Right ventricle myocardium inferior (tissue), 1 donor: ENCODE measurements at regions of chr3 and their contacts with region 1.

Region 1: DNA sequence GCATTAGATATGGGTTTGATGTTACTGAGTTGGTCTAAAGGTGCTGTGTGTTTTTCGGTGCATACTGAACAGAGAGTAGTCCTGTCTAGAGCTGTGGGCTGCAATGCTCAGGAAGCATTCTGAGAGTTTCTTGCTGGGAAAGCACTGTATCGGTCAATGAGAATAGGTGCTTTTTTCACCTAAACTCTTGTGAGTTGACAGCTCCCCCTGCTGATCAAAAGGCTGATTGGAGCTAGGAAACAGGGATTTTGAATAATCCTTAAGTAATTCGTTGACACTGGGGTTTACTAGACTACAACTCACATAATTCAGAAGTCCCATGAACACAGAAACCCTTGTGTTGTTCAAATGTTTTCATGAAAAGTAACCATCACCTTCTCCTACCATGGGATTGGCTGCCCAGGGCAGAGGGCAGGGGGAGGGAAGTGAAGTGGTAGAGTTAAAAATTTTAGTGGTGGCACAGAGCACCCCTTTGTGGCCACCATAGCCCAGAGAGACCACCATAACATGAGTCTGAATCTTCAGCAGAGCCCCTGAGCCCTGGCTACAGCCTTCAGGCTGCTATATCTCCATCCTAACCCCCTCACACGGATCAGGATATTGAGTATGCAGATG is 13.0 kb upstream of the MANF start:
- DNase-seq: no peak
- ATAC-seq: no peak

Region 2: DNA sequence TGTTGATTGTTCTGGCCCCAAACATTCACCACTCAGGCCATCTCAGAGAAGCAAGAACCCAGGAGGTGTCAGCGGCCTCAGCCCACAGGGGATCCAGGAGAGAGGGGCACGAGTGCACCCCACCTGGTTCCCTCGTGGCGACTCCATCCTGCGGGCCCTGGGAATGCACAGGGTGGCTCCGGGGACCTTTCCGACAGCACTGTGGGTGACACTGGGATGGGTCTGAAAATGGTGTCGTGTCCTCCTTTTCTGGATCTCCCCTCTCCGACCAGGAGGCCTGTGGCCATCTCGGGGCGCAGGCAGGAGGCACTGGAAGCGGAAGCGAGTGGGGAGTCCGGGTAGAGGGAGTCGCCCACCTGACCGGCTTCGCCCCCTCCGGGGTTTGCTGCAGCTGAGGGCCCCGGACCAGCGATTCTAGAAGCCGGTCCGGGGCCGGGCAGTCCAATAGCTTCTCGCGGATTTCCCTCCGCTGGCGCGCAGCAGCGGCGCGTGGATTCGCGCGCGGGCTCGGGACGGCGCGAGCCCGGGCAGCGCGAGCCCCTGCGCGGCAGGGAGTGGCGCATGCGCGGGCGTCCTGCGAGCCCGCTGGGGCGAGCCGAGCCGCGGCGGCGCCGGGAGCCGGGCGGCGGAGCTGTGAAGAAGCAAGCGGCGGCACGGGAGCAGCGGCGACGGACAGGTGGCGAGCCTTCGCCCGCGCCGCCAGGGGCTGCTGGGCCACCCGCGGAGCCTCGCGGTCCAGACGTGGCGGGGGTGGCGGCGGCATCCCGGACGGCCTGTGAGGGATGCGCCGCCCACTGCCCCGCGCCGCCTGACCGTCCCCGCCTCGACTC is 697.5 kb before region 1 on chr3 and contains the start of gene DOCK3:
- intact Hi-C with region 1: loop called (anchors 5 kb)
- DNase-seq: peak; percentile 80
- ATAC-seq: peak; percentile 90
- total RNA-seq, gene DOCK3: 3.9 TPM

Region 3: DNA sequence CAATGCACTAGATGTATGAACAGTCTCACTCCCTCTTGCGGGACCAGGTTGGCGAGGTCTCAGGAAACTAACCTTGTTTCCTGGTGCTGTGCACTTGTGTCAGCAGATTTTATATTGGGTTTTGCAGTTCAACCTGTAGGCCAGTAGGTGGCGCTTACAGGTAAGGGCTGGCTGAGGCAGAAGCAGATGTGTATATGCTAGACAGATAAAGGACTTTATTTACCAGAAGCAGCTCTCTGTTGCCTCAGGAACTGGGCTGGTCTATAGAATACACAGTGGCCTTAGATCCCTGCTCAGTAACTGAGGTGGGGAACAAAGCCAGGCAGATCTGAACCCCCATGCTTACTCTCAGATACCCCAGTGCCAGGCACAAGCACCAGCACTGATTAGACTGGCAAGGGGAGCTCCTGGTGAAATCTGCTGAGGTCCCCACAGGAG is 400.5 kb before region 1 on chr3:
- intact Hi-C with region 1: loop called (anchors 5 kb)
- DNase-seq: no peak
- ATAC-seq: peak; percentile 34

Region 4: DNA sequence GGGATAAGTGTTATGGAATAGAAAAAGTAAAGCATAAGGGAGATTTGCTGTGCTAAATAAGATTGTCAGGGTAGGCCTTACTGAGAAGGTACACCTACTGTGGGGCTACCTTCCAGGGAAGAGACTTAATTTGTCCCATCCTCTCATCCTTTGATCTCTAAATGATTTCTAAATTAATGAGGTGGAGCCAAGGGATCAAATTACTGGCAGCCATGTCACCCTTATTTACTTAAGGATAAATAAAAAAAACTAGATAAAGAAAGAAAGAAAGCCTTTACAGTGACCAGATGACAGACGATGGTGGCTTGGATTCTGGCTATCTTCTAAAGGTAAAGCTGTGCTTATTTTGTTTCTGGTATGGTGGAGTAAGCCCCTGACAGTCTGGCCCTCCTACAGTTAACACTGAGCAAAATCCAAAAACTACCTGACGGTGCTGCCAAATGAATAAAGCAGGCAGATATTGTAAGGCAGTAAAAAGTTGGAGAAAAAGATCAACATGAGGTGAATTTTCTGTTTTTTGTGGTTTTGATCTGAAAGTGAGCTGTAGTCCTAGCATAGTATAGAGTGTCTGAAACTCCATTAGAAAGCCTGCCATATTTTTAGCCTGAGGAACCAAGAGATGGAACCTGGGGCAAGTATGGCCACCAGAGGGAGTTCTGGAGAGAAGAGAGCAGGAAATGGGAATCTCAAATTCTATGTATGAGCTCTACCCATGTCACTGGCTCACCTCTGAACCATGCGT is 272.1 kb before region 1 on chr3:
- intact Hi-C with region 1: loop called (anchors 5 kb)
- DNase-seq: no peak
- ATAC-seq: peak; percentile 52

Region 5: GRCh38 chr3:51145811-51146585 is 226.1 kb before region 1 on chr3:
- intact Hi-C with region 1: no loop called
- DNase-seq: no peak
- ATAC-seq: no peak

Region 6: GRCh38 chr3:51538459-51539290 is 166.6 kb after region 1 on chr3 and contains the start of gene RAD54L2:
- intact Hi-C with region 1: no loop called
- DNase-seq: peak; percentile 91
- ATAC-seq: peak; percentile 98
- total RNA-seq, gene RAD54L2: 10.3 TPM